Posterior cingulate gyrus (tissue), 11 donors: ENCODE measurements at regions of chr11 and their contacts with region 1.

Region 1: GRCh38 chr11:1917671-1918516 is 1.6 kb upstream of the TNNT3 start:
- DNase-seq: peak in 2 of 10 donors; percentile 74 to 75

Region 2: GRCh38 chr11:1882519-1883238 is 35.2 kb before region 1 on chr11:
- intact Hi-C with region 1: loop called (anchors 5 kb)
- DNase-seq: peak; percentile 49 to 96 (median 72)

Region 3: DNA sequence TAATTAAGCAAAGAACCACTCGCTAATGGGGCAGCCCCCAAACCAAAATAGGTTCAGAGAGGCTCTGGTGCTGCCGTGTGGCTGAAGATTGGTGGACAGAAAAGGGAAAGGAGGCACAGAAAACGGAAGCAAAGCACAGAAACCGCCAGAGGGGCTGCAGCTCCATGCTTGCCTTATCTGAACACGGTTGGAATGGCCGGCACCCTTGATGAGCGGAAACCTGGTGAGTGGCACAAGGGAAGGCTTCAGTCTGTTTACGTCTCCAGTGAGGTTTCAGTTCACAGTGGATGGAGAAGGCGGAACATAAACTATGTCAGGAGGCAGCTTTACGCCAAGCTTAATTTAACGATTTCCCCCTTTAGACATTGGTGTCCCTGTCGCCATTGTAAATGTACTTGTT is 21.0 kb before region 1 on chr11:
- intact Hi-C with region 1: loop called (anchors 1 kb)
- DNase-seq: peak in 2 of 10 donors; percentile 15 to 66